Panc1 (cell line): ENCODE measurements at regions of chrX and their contacts with region 1.

Region 1: DNA sequence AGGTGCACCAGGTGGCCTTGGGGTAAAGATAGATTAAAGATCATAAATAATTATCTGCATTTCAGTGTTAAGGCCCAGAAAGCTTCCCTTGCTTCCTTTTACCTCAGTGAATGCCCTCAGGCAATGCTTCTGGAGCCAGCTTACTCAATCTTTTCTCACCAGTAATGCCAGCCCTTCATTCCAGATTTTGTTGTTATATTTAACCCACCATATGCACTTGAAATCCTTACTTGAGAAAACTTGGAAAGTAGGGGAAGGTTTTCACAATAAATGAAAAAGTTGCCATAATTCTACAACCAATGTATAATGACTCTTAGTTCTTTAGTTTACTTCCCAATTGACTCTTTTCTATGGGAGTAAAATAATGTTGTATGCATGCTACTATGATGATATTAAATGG is 17.1 kb upstream of the PBDC1 start:
- DNase-seq: no peak
- ATAC-seq: no peak
- H3K4me3 ChIP-seq: no peak overlapping the region
- H3K27ac ChIP-seq: no peak overlapping the region
- H3K4me1 ChIP-seq: no peaks in the 10 kb centered on the region
- H3K27me3 ChIP-seq: no peaks in the 10 kb centered on the region; the same call in 1 of the 2 replicates
- CTCF ChIP-seq: no peak

Region 2: GRCh38 chrX:76228499-76228898 is 72.7 kb after region 1 on chrX:
- CTCF ChIA-PET with region 1: no interaction called
- POLR2A ChIA-PET with region 1: no interaction called
- in situ Hi-C with region 1: no loop called
- intact Hi-C with region 1: no loop called
- DNase-seq: no peak
- ATAC-seq: no peak
- H3K4me3 ChIP-seq: no peak overlapping the region
- H3K27ac ChIP-seq: no peak overlapping the region
- H3K4me1 ChIP-seq: no peaks in the 10 kb centered on the region
- H3K27me3 ChIP-seq: no peaks in the 10 kb centered on the region
- CTCF ChIP-seq: no peak

Region 3: GRCh38 chrX:76253432-76253831 is 97.6 kb after region 1 on chrX:
- CTCF ChIA-PET with region 1: no interaction called
- POLR2A ChIA-PET with region 1: no interaction called
- in situ Hi-C with region 1: no loop called
- intact Hi-C with region 1: loop called (anchors 5 kb)
- DNase-seq: peak; percentile 8
- ATAC-seq: peak; percentile 88
- H3K4me3 ChIP-seq: no peak overlapping the region
- H3K27ac ChIP-seq: no peak overlapping the region
- H3K4me1 ChIP-seq: no peaks in the 10 kb centered on the region
- H3K27me3 ChIP-seq: no peaks in the 10 kb centered on the region; the same call in 1 of the 2 replicates
- CTCF ChIP-seq: peak; percentile 67